Common myeloid progenitor, CD34-positive (primary cell): ENCODE measurements at regions of chr18 and their contacts with region 1.

Region 1: GRCh38 chr18:46497129-46497528 is 159.9 kb downstream of the LOXHD1 start:
- DNase-seq: peak; percentile 29 to 65 (median 62)
- H3K4me3 ChIP-seq: no peak overlapping the region
- H3K27ac ChIP-seq: no peak overlapping the region
- H3K4me1 ChIP-seq: no peaks in the 10 kb centered on the region
- H3K27me3 ChIP-seq: peaks cover 0 to 5% (median 2%) of the 10 kb centered on the region in 5 experiments

Region 2: GRCh38 chr18:46481048-46481846 is 15.9 kb before region 1 on chr18:
- CTCF ChIA-PET with region 1: interaction called, 10 read pairs
- POLR2A ChIA-PET with region 1: no interaction called
- DNase-seq: peak; percentile 59 to 82 (median 76)
- H3K4me3 ChIP-seq: no peak overlapping the region
- H3K27ac ChIP-seq: no peak overlapping the region
- H3K4me1 ChIP-seq: no peaks in the 10 kb centered on the region
- H3K27me3 ChIP-seq: peaks cover 0 to 39% (median 6%) of the 10 kb centered on the region in 5 experiments

Region 3: DNA sequence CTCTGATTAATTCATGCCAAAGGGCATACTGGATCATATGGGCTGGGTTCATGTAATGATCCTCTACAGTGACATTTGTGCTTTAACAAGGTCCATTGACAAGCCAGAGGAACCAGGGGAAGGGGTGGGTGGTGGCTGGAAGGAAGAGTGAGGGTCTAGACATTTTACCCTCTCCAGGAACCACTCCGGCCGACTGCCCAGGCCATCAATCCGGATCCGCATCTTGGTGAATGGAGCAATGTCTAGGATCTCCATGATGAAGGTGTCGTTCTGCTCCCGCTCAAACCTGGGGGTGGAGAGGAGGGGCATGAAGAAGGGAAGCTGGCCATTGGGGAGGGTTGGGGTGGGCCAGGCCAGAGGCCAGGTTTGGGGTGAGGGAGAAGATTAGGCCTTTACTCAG is 12.4 kb after region 1 on chr18:
- CTCF ChIA-PET with region 1: no interaction called
- POLR2A ChIA-PET with region 1: no interaction called
- DNase-seq: no peak
- H3K4me3 ChIP-seq: no peak overlapping the region
- H3K27ac ChIP-seq: no peak overlapping the region
- H3K4me1 ChIP-seq: no peaks in the 10 kb centered on the region
- H3K27me3 ChIP-seq: peaks cover 0 to 3% (median 0%) of the 10 kb centered on the region in 5 experiments